ENCODE measurements at regions of chr2 and their contacts with region 1.

Region 1: GRCh38 chr2:65566620-65567019 is 134.2 kb upstream of the SPRED2 start:
- DNase-seq: peak; percentile 21 to 54
- H3K4me3 ChIP-seq: peak overlapping the region; percentile 24; the same call in 1 of the 2 replicates
- H3K27ac ChIP-seq: 0 out of 2 replicates have a peak overlapping the region, but pooled peaks have one; percentile 31
- H3K4me1 ChIP-seq: peaks cover 10% of the 10 kb centered on the region; the same call in 1 of the 2 replicates
- H3K27me3 ChIP-seq: no peaks in the 10 kb centered on the region
- CTCF ChIP-seq: no peak

Region 2: DNA sequence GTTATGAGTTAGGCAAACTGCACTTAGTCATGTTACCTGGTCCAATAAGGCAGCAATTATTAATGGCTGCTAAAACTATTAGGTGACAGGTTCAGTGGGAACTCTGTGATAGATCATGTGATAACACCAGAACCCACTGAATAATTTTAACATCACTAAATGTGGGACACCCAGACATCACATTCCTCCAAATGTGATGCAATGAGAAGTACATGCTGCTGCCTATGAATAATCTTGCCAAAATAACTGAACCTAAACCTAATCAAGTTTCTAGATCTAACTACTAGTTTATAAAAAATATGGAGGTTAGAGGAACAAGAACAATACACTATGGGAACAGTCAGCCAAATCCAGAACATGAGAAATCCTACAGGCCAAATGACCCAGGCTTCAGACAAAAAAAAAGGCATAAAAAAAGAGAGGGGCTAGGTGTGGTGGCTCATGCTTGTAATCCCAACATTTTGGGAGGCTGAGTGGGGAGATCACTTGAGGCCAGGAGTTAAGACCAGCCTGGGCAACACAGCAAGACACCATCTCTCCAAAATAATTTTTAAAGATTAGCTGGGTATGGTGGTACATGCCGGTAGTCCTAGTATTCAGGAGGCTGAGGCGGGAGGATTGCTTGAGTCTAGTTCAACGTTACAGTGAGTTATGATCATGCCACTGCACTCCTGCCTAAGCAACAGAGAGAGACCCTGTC is 346.0 kb before region 1 on chr2:
- CTCF ChIA-PET with region 1: no interaction called
- POLR2A ChIA-PET with region 1: no interaction called
- intact Hi-C with region 1: no loop called
- DNase-seq: peak in 1 of 2 experiments; percentile 32
- H3K4me3 ChIP-seq: no peak overlapping the region
- H3K27ac ChIP-seq: no peak overlapping the region
- H3K4me1 ChIP-seq: 0 out of 2 replicates have a peak, but pooled peaks cover 8% of the 10 kb centered on the region
- H3K27me3 ChIP-seq: no peaks in the 10 kb centered on the region
- CTCF ChIP-seq: no peak

Region 3: DNA sequence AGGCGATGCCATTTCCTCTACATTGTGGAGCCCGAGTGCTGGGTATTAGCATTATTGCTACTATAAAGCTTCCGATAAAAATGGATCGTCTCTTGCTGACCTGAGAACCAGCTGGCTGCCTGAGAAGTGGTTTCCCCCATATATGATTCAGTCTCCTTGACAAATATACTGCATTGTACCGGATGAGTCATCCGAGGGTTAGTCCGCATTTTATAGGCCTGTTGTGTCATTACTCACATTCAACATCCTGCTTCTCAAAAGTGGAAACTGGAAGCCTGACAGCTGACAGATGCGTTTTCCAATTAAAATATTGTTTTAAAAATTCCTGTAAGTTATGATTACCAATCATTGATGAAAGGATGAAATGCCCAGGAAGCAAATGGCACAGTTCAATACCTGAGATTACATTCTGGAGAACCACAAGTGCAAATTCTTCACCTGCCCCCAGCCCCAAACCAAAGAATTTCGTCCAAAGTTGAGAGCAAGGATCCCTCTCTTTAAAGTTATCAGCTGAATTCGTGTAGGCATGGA is 200.0 kb before region 1 on chr2:
- CTCF ChIA-PET with region 1: no interaction called
- POLR2A ChIA-PET with region 1: no interaction called
- intact Hi-C with region 1: loop called (anchors 5 kb)
- DNase-seq: peak; percentile 57 to 96
- H3K4me3 ChIP-seq: peak overlapping the region; percentile 48; the same call in 1 of the 2 replicates
- H3K27ac ChIP-seq: peak overlapping the region; percentile 76
- H3K4me1 ChIP-seq: peaks cover 49% of the 10 kb centered on the region
- H3K27me3 ChIP-seq: no peaks in the 10 kb centered on the region
- CTCF ChIP-seq: no peak

Region 4: DNA sequence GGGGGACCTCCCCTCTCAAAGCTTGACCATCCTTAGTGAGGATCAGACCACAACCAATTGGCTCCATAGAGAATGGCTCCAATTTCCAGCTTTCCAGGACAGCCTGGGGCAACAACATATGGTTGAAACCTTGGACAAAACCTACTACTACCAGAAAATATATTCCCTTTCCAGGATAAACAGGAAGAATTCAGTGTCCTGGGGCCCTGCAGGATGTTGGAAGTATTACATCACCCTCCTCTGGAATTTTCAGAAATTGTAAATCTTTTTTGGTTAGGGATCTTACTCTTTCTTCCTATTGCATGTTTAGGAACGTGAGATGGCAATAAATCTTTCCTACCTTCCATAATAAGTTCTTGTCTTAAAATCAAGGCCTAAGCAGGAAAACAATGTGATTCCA is 709.4 kb after region 1 on chr2:
- CTCF ChIA-PET with region 1: no interaction called
- POLR2A ChIA-PET with region 1: no interaction called
- intact Hi-C with region 1: no loop called
- DNase-seq: no peak
- H3K4me3 ChIP-seq: no peak overlapping the region
- H3K27ac ChIP-seq: no peak overlapping the region
- H3K4me1 ChIP-seq: no peaks in the 10 kb centered on the region
- H3K27me3 ChIP-seq: no peaks in the 10 kb centered on the region
- CTCF ChIP-seq: no peak; the same call in 1 of the 2 replicates

Measured in PC-9 (cell line).